Motor neuron (in vitro differentiated cells): ENCODE measurements at regions of chr7 and their contacts with region 1.

Region 1: GRCh38 chr7:72032934-72033333 is 379.2 kb downstream of the CALN1 start:
- ATAC-seq: no peak
- H3K4me3 ChIP-seq: no peak overlapping the region
- H3K27ac ChIP-seq: no peak overlapping the region
- H3K4me1 ChIP-seq: no peaks in the 10 kb centered on the region

Region 2: GRCh38 chr7:71925663-71926062 is 107.3 kb before region 1 on chr7:
- in situ Hi-C with region 1: loop called in 1 of 9 experiments (anchors 25 kb)
- ATAC-seq: no peak
- H3K4me3 ChIP-seq: no peak overlapping the region
- H3K27ac ChIP-seq: no peak overlapping the region
- H3K4me1 ChIP-seq: no peaks in the 10 kb centered on the region

Region 3: GRCh38 chr7:72244814-72245398 is 212.0 kb after region 1 on chr7:
- in situ Hi-C with region 1: no loop called
- ATAC-seq: no peak
- H3K4me3 ChIP-seq: no peak overlapping the region
- H3K27ac ChIP-seq: no peak overlapping the region
- H3K4me1 ChIP-seq: no peaks in the 10 kb centered on the region